Ascending aorta (tissue), 2 donors: ENCODE measurements at regions of chr11 and their contacts with region 1.

Region 1: DNA sequence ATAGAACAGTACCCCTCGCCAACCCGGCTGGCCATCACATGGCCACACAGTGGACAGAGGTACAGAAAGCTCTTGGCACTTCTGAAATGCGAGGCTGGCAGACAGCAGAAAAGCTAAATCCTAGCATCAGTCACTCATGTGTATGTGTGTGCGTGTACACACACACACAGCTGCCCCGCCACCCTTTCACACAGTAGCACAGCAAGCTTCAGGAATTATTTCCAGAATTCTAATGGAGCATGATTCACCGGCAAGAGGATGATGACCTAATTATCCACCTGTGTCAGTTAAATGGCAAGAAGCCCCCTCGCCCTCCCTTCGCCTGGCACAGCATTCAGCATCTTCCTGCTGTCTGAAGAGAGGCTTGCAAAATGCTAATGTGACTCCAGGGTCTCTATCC is 336.0 kb downstream of the SHANK2 start:
- DNase-seq: no peak
- H3K4me3 ChIP-seq: no peak overlapping the region
- H3K27ac ChIP-seq: no peak overlapping the region
- H3K4me1 ChIP-seq: no peaks in the 10 kb centered on the region
- H3K27me3 ChIP-seq: no peaks in the 10 kb centered on the region
- CTCF ChIP-seq: no peak

Region 2: GRCh38 chr11:70804139-70804837 is 112.1 kb before region 1 on chr11:
- intact Hi-C with region 1: no loop called
- DNase-seq: no peak
- H3K4me3 ChIP-seq: no peak overlapping the region
- H3K27ac ChIP-seq: no peak overlapping the region
- H3K4me1 ChIP-seq: no peaks in the 10 kb centered on the region
- H3K27me3 ChIP-seq: no peaks in the 10 kb centered on the region
- CTCF ChIP-seq: no peak

Region 3: GRCh38 chr11:70948855-70949569 is 32.7 kb after region 1 on chr11:
- intact Hi-C with region 1: loop called (anchors 1 kb)
- DNase-seq: no peak
- H3K4me3 ChIP-seq: no peak overlapping the region
- H3K27ac ChIP-seq: no peak overlapping the region
- H3K4me1 ChIP-seq: no peaks in the 10 kb centered on the region
- H3K27me3 ChIP-seq: no peaks in the 10 kb centered on the region
- CTCF ChIP-seq: no peak